Endothelial cell of umbilical vein (primary cell): ENCODE measurements at regions of chr2 and their contacts with region 1.

Region 1: GRCh38 chr2:174697255-174697654 is 67.0 kb downstream of the CHRNA1 start:
- DNase-seq: peak; percentile 57
- H3K4me3 ChIP-seq: no peak overlapping the region
- H3K27ac ChIP-seq: no peak overlapping the region
- H3K4me1 ChIP-seq: no peaks in the 10 kb centered on the region
- H3K27me3 ChIP-seq: peaks cover 9 to 11% of the 10 kb centered on the region in 2 experiments
- CTCF ChIP-seq: peak; percentile 79 to 89
- POLR2A ChIP-seq: no peak

Region 2: DNA sequence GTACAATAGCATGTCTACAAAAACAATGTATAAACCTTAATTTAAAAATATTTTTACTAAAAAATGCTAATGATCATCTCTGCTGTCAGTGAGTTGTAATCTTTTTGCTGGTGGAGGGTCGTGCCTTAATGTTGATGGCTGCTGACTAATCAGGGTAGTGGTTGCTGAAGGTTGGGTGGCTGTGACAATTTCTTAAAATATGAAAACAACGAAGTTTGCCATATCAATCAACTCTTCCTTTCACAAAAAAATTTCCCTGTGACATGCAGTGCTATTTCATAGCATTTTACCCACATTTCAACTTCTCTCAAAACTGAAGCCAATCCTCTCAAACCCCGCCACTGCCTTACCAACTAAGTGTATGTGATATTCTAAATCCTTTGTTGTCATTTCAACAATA is 561.3 kb before region 1 on chr2:
- CTCF ChIA-PET with region 1: no interaction called
- POLR2A ChIA-PET with region 1: no interaction called
- dilution Hi-C with region 1: no loop called
- intact Hi-C with region 1: no loop called
- DNase-seq: no peak
- H3K4me3 ChIP-seq: no peak overlapping the region
- H3K27ac ChIP-seq: no peak overlapping the region
- H3K4me1 ChIP-seq: no peaks in the 10 kb centered on the region
- H3K27me3 ChIP-seq: no peaks in the 10 kb centered on the region
- CTCF ChIP-seq: no peak
- POLR2A ChIP-seq: no peak

Region 3: DNA sequence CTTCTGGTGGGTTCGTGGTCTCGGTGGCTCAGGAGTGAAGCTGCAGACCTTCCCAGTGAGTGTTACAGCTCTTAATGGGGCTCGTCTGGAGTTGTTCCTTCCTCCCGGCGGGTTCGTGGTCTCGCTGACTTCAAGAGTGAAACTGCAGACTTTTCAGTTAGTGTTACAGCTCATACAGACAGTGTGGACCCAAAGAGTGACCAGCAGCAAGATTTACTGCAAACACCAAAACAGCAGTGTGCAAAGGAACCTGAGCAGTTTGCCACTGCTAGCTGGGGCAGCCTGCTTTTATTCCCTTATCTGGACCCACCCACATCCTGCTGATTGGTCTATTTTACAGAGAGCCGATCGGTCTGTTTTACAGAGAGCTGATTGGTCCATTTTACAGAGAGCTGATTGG is 11.5 kb after region 1 on chr2:
- CTCF ChIA-PET with region 1: interaction called, 12 read pairs
- POLR2A ChIA-PET with region 1: no interaction called
- dilution Hi-C with region 1: no loop called
- intact Hi-C with region 1: no loop called
- DNase-seq: no peak
- H3K4me3 ChIP-seq: no peak overlapping the region
- H3K27ac ChIP-seq: no peak overlapping the region
- H3K4me1 ChIP-seq: no peaks in the 10 kb centered on the region
- H3K27me3 ChIP-seq: peaks cover 9 to 14% of the 10 kb centered on the region in 2 experiments
- CTCF ChIP-seq: no peak
- POLR2A ChIP-seq: no peak

Region 4: GRCh38 chr2:174764280-174765255 is 67.3 kb after region 1 on chr2 and contains the start of gene CHRNA1:
- CTCF ChIA-PET with region 1: interaction called, 21 read pairs
- POLR2A ChIA-PET with region 1: no interaction called
- dilution Hi-C with region 1: no loop called
- intact Hi-C with region 1: no loop called
- DNase-seq: peak; percentile 49
- H3K4me3 ChIP-seq: no peak within 1 kb of the TSS
- H3K27ac ChIP-seq: peak within 1 kb of the TSS; percentile 86
- H3K4me1 ChIP-seq: peaks cover 23% of the 10 kb centered on the region
- H3K27me3 ChIP-seq: no peaks in the 10 kb centered on the region
- CTCF ChIP-seq: no peak
- POLR2A ChIP-seq: no peak
- total RNA-seq, gene CHRNA1: 8.7 and 11.3 TPM in 2 replicates

Region 5: DNA sequence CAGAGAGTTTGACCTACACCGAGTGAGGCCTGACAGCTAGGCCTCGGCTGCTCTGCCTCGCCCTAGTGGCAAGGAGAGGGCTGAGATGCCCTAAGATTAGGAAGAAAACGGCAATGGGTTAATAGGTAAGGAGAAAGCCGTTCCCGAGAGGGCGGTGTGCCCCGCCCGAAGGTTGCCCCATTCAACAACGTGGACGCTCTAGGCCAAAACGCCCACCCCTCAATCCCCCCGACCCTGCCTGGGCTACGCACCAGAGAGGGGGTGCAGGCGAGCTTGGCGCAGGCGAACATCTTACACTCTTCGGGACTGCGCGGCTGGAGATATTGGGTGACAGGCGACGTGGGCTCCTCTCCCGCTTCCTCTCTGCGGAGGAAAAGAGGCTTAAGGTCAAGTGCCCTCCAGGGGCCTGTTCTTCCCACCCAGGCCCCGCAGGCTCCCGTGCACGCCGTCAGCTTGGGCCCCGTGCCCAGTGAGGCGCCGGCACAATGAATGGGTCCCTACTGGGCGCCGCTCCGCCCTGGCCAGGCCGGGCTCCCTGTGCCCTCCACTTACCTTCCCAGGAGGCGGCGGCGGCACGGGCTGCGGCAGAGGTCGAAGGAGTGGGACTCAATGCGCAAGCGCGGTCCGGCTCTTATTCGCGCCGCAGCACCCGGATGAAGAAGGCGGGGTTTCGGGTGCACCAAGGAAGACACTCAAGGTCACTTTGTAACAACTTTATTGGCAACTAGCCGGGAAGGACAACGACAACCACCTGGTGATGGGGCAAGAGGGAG is 484.0 kb after region 1 on chr2 and contains the start of gene ATP5MC3:
- CTCF ChIA-PET with region 1: interaction called, 4 read pairs
- POLR2A ChIA-PET with region 1: no interaction called
- dilution Hi-C with region 1: no loop called
- intact Hi-C with region 1: loop called (anchors 10 kb)
- DNase-seq: peak; percentile 86
- H3K4me3 ChIP-seq: peak within 1 kb of the TSS; percentile 49 to 74 (median 69)
- H3K27ac ChIP-seq: peak within 1 kb of the TSS; percentile 48
- H3K4me1 ChIP-seq: peaks cover 6% of the 10 kb centered on the region
- H3K27me3 ChIP-seq: no peaks in the 10 kb centered on the region
- CTCF ChIP-seq: peak in 1 of 2 donors; percentile 25
- POLR2A ChIP-seq: peak; percentile 66
- total RNA-seq, gene ATP5MC3: 201 and 233 TPM in 2 replicates

Region 6: GRCh38 chr2:175326801-175327200 is 629.5 kb after region 1 on chr2:
- CTCF ChIA-PET with region 1: interaction called, 60 read pairs
- POLR2A ChIA-PET with region 1: no interaction called
- dilution Hi-C with region 1: no loop called
- intact Hi-C with region 1: loop called (anchors 2 kb)
- DNase-seq: no peak
- H3K4me3 ChIP-seq: no peak overlapping the region
- H3K27ac ChIP-seq: no peak overlapping the region
- H3K4me1 ChIP-seq: no peaks in the 10 kb centered on the region
- H3K27me3 ChIP-seq: no peaks in the 10 kb centered on the region
- CTCF ChIP-seq: no peak
- POLR2A ChIP-seq: no peak

Region 7: DNA sequence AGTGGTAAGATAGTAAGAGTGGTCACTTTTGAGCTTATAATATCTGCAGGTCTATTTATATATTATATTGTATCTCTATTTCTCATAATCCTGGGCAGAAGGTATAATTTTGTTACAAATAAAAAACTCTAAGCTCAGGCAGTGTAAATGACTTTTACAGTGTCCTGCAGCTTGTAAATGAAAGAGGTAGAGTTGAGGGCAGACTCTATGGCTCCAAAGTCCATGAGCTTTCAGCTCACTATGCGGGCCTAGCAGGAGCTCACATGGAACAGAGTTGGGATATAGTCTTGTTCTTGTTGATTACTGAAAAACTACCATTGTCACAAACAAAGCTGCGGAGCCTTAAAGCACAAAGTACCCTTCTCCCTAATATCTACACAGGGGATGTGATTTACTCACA is 943.4 kb after region 1 on chr2:
- CTCF ChIA-PET with region 1: no interaction called
- POLR2A ChIA-PET with region 1: no interaction called
- dilution Hi-C with region 1: no loop called
- intact Hi-C with region 1: no loop called
- DNase-seq: no peak
- H3K4me3 ChIP-seq: no peak overlapping the region
- H3K27ac ChIP-seq: no peak overlapping the region
- H3K4me1 ChIP-seq: no peaks in the 10 kb centered on the region
- H3K27me3 ChIP-seq: no peaks in the 10 kb centered on the region
- CTCF ChIP-seq: no peak
- POLR2A ChIP-seq: no peak